ENCODE measurements at regions of chr11 and their contacts with region 1.

Region 1: GRCh38 chr11:58654079-58654907 is 31.8 kb downstream of the CNTF start:
- DNase-seq: peak; percentile 86 to 87 (median 86)
- ATAC-seq: peak; percentile 99 to 100 (median 100)
- H3K4me3 ChIP-seq: peak overlapping the region in 2 of 3 donors; percentile 7 to 15
- H3K27ac ChIP-seq: no peak overlapping the region
- H3K4me1 ChIP-seq: peaks cover 0 to 5% (median 0%) of the 10 kb centered on the region in 4 donors
- H3K27me3 ChIP-seq: no peaks in the 10 kb centered on the region
- CTCF ChIP-seq: peak; percentile 87 to 97 (median 94)
- POLR2A ChIP-seq: no peak

Region 2: GRCh38 chr11:58503361-58503856 is 150.9 kb before region 1 on chr11:
- intact Hi-C with region 1: no loop called
- DNase-seq: no peak
- ATAC-seq: no peak
- H3K4me3 ChIP-seq: no peak overlapping the region
- H3K27ac ChIP-seq: no peak overlapping the region
- H3K4me1 ChIP-seq: no peaks in the 10 kb centered on the region
- H3K27me3 ChIP-seq: no peaks in the 10 kb centered on the region
- CTCF ChIP-seq: no peak
- POLR2A ChIP-seq: no peak

Region 3: GRCh38 chr11:58597486-58598144 is 56.7 kb before region 1 on chr11:
- intact Hi-C with region 1: no loop called
- DNase-seq: no peak
- ATAC-seq: no peak
- H3K4me3 ChIP-seq: no peak overlapping the region
- H3K27ac ChIP-seq: no peak overlapping the region
- H3K4me1 ChIP-seq: peaks cover 0 to 25% (median under 1%) of the 10 kb centered on the region in 4 donors
- H3K27me3 ChIP-seq: no peaks in the 10 kb centered on the region
- CTCF ChIP-seq: no peak
- POLR2A ChIP-seq: no peak

Region 4: DNA sequence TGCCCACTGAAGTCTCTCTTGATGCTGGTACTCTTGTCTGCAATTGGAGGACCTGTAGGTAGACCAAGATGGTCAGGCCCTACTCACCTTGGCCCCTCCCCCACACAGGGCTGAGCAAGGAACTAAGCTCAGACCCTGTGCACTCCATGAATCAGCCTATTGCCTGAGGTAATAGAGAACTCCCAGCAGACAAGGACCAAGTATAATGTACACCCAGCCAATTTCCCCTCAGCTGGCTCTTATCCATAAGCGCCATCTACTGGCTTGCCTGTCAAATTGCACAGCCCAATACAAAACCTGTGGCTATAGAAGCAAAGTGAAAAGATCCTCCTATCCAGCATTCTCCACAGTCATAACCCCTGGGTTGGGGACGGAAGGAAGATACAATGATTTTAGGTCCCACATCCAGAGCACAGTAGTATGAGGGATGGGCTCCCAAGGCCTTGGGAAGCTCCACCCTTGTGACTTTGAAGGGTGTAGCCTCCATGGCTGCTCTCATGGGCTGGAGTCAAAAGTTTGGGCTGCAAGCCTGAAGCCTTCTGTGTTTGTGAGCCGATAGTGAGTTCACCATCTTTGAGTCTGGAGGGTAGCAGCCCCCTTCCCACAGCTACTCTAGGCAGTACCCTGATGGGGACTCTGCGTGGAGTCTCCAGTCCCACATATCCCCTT is 134.2 kb after region 1 on chr11:
- intact Hi-C with region 1: loop called (anchors 10 kb)
- DNase-seq: peak; percentile 32 to 72 (median 60)
- ATAC-seq: peak; percentile 98 to 100 (median 98)
- H3K4me3 ChIP-seq: no peak overlapping the region
- H3K27ac ChIP-seq: no peak overlapping the region
- H3K4me1 ChIP-seq: peaks cover 0 to 7% (median 2%) of the 10 kb centered on the region in 4 donors
- H3K27me3 ChIP-seq: no peaks in the 10 kb centered on the region
- CTCF ChIP-seq: peak; percentile 51 to 86 (median 74)
- POLR2A ChIP-seq: no peak